PC-9 (cell line): ENCODE measurements at regions of chr3 and their contacts with region 1.

Region 1: DNA sequence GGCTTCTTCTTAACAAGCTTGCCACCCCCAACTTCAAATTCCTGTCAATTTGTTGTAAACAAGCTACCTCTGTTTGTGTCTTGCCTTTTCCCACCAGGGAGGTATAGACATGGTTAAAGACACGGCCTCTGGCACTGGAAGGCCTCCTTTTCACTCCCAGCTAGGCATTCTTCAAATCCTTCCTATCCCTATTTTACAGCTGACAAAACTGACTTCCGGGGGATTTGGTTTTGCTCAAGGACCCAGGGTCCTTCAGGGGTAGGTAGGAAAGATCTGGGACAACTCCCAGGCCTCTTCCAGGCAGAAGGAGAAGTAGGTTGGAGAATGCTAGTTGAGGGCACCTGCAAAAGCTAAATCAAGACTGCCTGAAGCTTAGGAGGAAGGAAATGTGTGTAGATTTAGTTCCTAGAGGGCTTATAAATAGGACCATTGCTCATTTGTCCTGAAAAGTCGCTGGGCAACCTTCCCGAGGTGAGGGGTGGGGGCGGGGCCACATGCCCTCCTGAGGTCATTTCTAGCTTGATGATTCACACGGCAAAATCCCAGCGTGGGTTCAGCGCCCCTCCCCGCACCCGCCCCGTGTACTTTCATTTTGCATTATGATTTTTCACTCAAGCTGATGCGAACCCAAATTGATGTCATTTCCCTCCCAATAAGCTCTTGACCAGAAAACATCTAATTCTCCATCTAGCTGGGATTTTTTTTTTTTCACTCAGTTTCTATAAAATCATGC is 365.5 kb downstream of the SHQ1 start:
- DNase-seq: peak; percentile 51 to 76
- H3K4me3 ChIP-seq: peak overlapping the region; percentile 46; the same call in 1 of the 2 replicates
- H3K27ac ChIP-seq: peak overlapping the region; percentile 49
- H3K4me1 ChIP-seq: peaks cover 32% of the 10 kb centered on the region
- H3K27me3 ChIP-seq: no peaks in the 10 kb centered on the region
- CTCF ChIP-seq: no peak

Region 2: DNA sequence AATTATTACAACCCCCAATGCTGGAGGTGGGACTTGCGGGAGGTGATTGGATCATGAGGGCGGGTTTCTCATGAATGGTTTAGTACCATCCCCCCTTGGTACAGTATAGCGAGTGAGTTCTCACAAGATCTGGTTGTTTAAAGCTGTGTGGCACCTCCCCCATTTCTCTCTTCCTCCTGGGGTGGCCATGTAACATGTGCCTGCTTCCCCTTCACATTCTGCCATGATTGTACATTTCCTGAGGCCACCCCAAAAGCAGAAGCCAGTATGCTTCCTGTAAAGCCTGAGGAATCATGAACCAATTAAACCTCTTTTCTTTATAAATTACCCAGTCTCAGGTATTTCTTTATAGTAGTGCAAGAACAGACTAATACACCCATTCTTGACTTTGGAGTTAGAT is 677.6 kb before region 1 on chr3:
- CTCF ChIA-PET with region 1: no interaction called
- POLR2A ChIA-PET with region 1: no interaction called
- intact Hi-C with region 1: no loop called
- DNase-seq: no peak
- H3K4me3 ChIP-seq: no peak overlapping the region
- H3K27ac ChIP-seq: no peak overlapping the region
- H3K4me1 ChIP-seq: no peaks in the 10 kb centered on the region
- H3K27me3 ChIP-seq: peaks cover 3% of the 10 kb centered on the region; the same call in 1 of the 2 replicates
- CTCF ChIP-seq: no peak

Region 3: GRCh38 chr3:72591522-72592421 is 109.0 kb after region 1 on chr3:
- CTCF ChIA-PET with region 1: no interaction called
- POLR2A ChIA-PET with region 1: no interaction called
- intact Hi-C with region 1: loop called (anchors 10 kb)
- DNase-seq: peak; percentile 81 to 82
- H3K4me3 ChIP-seq: no peak overlapping the region
- H3K27ac ChIP-seq: peak overlapping the region; percentile 74
- H3K4me1 ChIP-seq: peaks cover 18% of the 10 kb centered on the region
- H3K27me3 ChIP-seq: no peaks in the 10 kb centered on the region
- CTCF ChIP-seq: no peak

Region 4: DNA sequence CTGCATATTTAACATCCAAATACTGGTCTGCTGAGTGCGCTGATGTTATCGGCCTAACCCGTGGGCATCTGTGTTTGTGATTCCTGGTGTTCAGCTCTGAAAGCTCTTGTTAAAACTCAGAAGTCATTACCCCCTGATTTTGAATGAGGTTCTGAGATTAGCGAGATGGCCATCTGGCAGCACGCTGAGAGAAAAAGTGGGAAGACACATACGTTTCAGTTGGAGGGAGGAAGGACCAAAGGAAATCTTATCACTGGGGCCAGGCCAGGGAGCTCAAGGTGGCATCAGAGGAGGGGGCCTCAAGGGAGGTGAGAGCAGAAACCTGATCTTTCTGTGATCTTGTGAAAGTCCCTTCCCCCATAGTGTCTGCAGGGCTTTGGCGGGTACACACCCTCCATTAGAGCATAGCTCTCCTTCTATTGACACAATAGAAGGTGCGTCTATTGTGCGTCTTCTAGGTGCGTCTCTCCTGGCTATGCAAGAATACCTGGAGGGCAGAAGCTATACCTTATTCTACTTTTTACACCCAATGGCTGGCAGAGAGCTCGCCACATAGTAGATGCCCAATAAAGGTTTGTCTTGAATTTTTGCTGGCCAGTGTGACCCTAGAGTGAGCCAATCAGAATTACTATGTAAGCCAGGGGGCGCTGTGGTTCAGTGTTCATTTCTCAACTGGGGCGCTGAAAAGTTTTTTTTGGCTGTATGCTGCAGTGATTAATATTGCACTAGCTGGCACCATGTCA is 183.1 kb after region 1 on chr3:
- CTCF ChIA-PET with region 1: no interaction called
- POLR2A ChIA-PET with region 1: no interaction called
- intact Hi-C with region 1: loop called (anchors 1 kb)
- DNase-seq: peak in 1 of 2 experiments; percentile 44
- H3K4me3 ChIP-seq: no peak overlapping the region
- H3K27ac ChIP-seq: no peak overlapping the region
- H3K4me1 ChIP-seq: peaks cover under 1% of the 10 kb centered on the region
- H3K27me3 ChIP-seq: no peaks in the 10 kb centered on the region
- CTCF ChIP-seq: peak; percentile 66

Region 5: DNA sequence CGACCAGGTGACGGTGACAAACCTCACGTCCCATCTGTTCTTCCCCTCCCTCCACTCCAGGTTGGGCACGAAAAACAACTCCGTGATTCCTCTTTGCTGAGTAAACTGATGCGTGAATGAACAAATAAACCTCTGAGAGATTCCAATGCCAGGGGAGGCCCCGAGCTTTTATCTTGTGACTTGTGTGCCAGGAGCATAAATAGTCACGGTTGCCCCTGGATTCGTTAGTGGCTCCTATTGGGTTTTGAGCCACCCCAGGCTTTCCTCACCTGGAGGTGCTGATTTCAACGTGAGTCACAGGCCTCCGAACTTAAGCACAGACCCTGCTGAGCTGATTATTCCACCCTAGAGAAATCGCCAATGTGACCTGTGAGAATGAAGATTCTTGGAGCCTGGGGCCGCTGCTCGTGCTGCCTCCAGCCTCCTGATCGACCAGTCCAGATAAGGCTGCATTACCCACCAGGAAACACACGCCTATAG is 246.3 kb after region 1 on chr3:
- CTCF ChIA-PET with region 1: no interaction called
- POLR2A ChIA-PET with region 1: interaction called, 55 read pairs
- intact Hi-C with region 1: no loop called
- DNase-seq: peak; percentile 75 to 95
- H3K4me3 ChIP-seq: peak overlapping the region; percentile 26; the same call in 1 of the 2 replicates
- H3K27ac ChIP-seq: peak overlapping the region; percentile 60
- H3K4me1 ChIP-seq: peaks cover 33% of the 10 kb centered on the region
- H3K27me3 ChIP-seq: no peaks in the 10 kb centered on the region
- CTCF ChIP-seq: no peak

Region 6: DNA sequence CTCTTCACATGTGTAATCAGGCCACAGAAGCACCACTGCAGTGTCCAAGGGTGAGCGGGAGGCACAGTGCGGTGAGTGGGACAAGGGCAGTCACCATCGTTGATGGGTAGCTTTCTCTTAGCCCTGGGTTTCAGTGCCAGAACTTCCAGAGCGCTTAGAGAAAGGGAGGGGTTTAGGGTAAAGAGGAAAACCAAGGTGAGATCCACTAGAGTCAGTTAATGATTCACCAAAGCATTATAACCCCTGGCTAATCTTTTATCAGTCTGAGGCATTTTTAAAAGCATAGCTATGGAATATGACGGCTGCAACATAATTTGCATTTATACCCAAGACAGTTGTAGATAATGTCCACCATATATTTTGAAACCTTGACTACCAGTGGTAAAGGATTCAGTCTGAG is 270.7 kb after region 1 on chr3:
- CTCF ChIA-PET with region 1: no interaction called
- POLR2A ChIA-PET with region 1: no interaction called
- intact Hi-C with region 1: no loop called
- DNase-seq: no peak
- H3K4me3 ChIP-seq: no peak overlapping the region
- H3K27ac ChIP-seq: no peak overlapping the region
- H3K4me1 ChIP-seq: no peaks in the 10 kb centered on the region
- H3K27me3 ChIP-seq: no peaks in the 10 kb centered on the region
- CTCF ChIP-seq: no peak